MCF 10A (cell line): ENCODE measurements at regions of chr9 and their contacts with region 1.

Region 1: DNA sequence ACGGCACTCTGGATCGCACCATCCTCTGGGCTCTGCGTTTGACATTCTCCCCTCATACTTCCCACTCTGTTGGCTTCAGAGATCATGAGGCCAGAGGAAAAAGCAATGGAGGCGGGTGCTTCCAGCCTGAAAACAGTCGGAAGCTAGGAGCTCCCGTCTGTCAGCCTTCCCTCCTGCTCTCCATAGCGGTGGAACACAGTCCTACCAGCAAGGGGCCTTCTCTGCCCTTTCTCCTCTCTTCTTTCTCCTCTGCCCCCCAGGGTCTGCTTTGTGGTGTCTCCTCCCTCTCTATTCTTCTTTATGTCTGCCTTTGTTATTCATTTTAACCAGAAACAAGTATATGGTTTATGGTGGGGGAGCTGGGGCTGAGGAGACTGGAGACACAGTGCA is 152.5 kb upstream of the NFIB start:
- DNase-seq: no peak
- H3K4me3 Mint-ChIP-seq: no peak overlapping the region
- H3K27ac Mint-ChIP-seq: no peak overlapping the region
- H3K4me1 Mint-ChIP-seq: no peaks in the 10 kb centered on the region
- H3K27me3 Mint-ChIP-seq: peaks cover 47% of the 10 kb centered on the region
- CTCF ChIP-seq: no peak

Region 2: GRCh38 chr9:14441976-14442651 is 24.3 kb before region 1 on chr9:
- CTCF ChIA-PET with region 1: no interaction called
- POLR2A ChIA-PET with region 1: no interaction called
- intact Hi-C with region 1: no loop called
- DNase-seq: peak; percentile 22
- H3K4me3 Mint-ChIP-seq: no peak overlapping the region
- H3K27ac Mint-ChIP-seq: no peak overlapping the region
- H3K4me1 Mint-ChIP-seq: peaks cover 6% of the 10 kb centered on the region
- H3K27me3 Mint-ChIP-seq: peaks cover 41% of the 10 kb centered on the region
- CTCF ChIP-seq: peak; percentile 22

Region 3: DNA sequence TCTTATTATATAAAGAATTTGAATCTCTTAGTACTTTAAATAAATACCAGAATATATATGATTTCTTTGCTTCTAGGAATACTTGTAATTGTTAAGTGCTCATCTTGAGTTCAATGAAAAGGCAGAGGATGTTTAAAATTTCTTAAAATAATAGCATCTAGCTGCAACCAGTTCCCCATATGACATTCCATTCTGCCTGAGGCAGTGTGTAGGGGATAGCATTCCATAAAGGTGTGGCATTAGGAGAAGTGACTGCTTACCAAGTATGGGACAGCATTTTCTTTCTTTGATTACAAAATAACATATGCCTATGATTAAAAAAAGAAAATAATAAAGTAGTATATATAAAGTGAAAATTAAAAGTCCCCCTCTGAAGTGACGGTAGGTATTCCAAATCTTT is 10.5 kb after region 1 on chr9:
- CTCF ChIA-PET with region 1: interaction called, 11 read pairs
- POLR2A ChIA-PET with region 1: interaction called, 3 read pairs
- intact Hi-C with region 1: no loop called
- DNase-seq: no peak
- H3K4me3 Mint-ChIP-seq: no peak overlapping the region
- H3K27ac Mint-ChIP-seq: no peak overlapping the region
- H3K4me1 Mint-ChIP-seq: peaks cover 19% of the 10 kb centered on the region
- H3K27me3 Mint-ChIP-seq: peaks cover 4% of the 10 kb centered on the region
- CTCF ChIP-seq: no peak

Region 4: DNA sequence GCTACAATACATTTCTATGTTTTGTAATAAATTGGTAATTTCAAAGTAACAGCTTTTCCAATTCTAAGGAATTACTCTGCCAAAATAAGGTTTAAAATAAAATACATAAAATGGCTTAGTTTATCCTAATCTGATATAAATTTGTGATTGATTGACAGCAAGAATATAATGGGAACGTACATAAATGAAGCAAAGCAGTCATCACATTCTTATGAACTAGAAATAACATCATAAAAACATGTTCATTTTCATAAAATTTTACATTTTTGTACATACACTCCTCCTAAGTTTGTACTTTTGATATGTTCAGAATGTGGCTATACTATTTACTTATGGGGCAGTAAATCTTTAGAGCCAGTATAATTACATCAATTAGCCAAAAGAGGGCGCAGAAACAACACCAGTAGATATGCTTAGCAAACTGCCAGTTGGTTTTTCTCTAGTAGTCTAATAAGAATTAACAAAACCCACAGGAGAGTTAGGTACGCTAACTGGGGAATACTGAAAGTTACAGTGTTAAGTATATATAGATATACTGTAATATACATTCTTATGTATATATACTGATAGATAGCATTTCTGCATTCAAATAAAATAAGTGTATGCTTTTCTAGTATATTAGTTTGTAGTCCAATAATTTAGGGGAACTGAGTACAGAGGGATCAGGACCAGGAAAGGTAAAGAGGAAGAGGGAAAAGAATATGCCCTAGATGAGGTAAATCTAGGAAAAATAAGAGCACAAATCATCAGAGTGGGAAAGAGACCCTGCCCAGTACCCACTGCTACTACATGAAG is 150.0 kb after region 1 on chr9:
- CTCF ChIA-PET with region 1: interaction called, 8 read pairs
- POLR2A ChIA-PET with region 1: no interaction called
- intact Hi-C with region 1: loop called (anchors 2 kb)
- DNase-seq: peak; percentile 65
- H3K4me3 Mint-ChIP-seq: no peak overlapping the region
- H3K27ac Mint-ChIP-seq: no peak overlapping the region
- H3K4me1 Mint-ChIP-seq: no peaks in the 10 kb centered on the region
- H3K27me3 Mint-ChIP-seq: no peaks in the 10 kb centered on the region
- CTCF ChIP-seq: peak; percentile 66

Region 5: DNA sequence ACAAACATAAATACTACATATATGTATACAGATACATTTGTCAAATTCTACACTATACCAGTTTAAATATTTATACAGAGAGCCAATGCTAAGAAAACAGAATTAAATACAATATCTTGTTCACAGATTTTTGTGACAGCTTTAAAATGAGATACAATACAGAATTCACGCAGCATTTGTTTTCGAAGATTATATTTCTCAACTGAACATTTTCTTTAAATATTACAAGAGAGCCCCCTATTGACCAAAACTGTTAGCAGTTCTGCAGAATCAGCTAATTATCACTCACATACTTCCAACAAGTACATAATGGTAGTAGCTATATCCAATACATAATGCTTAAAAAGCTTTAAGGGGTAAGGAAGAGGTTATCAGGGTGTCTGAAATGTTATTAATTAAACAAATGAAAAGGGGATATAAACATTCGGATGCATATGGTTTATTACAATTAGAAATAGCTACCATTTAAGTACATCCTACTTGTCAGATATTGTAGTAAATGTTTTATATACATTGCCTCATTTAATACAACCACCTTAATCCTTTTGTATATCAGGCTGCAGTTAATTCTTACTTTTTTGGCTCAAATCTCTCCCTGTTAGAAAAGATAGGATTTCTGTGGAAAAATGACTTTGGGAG is 195.1 kb after region 1 on chr9:
- CTCF ChIA-PET with region 1: interaction called, 6 read pairs
- POLR2A ChIA-PET with region 1: no interaction called
- intact Hi-C with region 1: loop called (anchors 5 kb)
- DNase-seq: peak; percentile 36
- H3K4me3 Mint-ChIP-seq: no peak overlapping the region
- H3K27ac Mint-ChIP-seq: no peak overlapping the region
- H3K4me1 Mint-ChIP-seq: no peaks in the 10 kb centered on the region
- H3K27me3 Mint-ChIP-seq: no peaks in the 10 kb centered on the region
- CTCF ChIP-seq: peak; percentile 48

Region 6: GRCh38 chr9:14846871-14847311 is 380.5 kb after region 1 on chr9:
- CTCF ChIA-PET with region 1: no interaction called
- POLR2A ChIA-PET with region 1: no interaction called
- intact Hi-C with region 1: loop called (anchors 5 kb)
- DNase-seq: peak; percentile 66
- H3K4me3 Mint-ChIP-seq: no peak overlapping the region
- H3K27ac Mint-ChIP-seq: no peak overlapping the region
- H3K4me1 Mint-ChIP-seq: peaks cover 4% of the 10 kb centered on the region
- H3K27me3 Mint-ChIP-seq: peaks cover 62% of the 10 kb centered on the region
- CTCF ChIP-seq: peak; percentile 74